GM13977 (cell line): ENCODE measurements at regions of chr22 and their contacts with region 1.

Region 1: DNA sequence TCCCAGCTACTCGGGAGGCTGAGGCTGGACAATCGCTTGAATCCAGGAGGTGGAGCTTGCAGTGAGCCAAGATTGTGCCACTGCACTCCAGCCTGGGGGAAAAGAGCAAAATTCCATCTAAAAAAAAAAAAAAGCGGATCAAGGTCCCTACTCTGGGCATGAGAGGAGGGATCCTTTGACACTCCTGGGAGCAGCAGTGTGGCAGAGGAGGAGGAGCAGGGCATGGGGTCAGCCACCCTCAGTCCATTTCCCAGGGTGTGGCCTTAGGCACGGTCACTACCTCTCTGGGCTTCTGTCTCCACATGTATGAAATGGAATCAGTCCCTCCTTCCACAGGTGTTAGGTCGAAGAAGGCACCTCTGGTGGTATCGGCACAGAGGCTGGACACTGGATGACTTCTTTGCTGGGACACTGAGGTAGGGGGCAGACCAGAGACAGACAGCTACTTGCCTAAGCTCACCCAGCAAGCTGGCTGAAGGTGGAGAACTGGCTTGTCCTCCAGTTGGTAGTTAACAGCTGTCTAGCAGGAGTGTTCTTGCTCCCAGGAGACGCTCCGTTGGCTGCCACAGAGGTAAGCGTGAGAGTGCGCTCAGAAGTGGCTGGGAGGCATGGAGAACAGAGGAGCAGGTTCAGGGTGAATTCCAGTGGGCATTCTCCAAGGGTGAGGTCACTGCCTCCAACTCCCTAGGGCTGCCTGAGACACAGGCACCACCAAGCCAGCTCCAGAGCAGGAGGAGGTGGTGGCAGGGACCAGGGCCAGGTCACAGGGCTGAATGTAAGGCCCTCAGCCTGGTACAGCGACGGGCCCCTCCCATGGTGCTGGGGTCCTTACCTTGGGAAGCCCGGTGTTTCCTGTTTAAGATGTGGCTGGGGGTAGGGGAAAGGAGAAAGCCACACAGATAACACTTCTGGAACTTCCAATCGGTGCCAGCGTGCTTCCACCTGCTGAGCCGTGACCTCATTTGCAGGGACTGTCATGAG is 19.5 kb downstream of the TXN2 start:
- DNase-seq: no peak
- CTCF ChIP-seq: no peak

Region 2: GRCh38 chr22:36301384-36301828 is 160.6 kb before region 1 on chr22:
- in situ Hi-C with region 1: loop called (anchors 10 kb)
- DNase-seq: peak; percentile 87
- CTCF ChIP-seq: peak; percentile 96